ENCODE measurements at regions of chr10 and their contacts with region 1.

Region 1: DNA sequence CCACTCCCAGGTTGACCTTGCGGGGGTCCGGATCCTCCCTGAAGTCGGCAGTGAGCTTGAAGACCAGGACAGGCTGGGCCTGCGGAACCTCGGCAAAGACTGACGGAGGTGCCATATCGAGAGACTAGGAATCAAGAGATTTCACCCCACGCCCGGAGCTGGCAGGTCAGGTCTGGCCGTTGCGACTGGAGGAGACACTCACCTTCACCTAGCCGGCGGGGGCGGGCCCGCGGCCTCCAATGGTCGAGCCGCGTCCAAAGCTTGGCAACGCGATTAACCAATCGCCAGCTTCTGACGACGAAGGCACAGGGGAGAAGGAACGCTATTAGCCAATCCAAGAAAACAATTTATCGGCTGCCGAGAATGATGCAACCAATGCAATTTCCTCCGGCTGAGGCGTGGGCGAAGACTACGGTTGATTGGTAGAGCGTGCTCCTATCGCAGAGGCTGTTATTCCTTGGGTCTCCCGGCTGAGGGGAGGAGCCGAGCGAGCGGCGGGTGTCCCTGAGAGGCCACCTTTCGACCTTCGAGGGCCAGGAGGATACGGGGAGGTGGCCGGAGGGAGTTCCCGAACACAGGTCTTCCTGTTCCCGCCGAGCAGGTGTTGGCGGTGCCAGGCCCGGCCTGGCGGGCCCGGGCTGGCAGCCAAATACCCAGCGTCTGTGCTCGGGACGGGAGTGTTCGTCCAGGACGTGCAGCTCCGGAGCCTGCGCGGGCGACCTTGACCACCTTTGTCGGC is at the start of gene GOT1:
- DNase-seq: peak; percentile 97 to 99
- ATAC-seq: peak; percentile 92 to 97
- H3K4me3 ChIP-seq: peak within 1 kb of the TSS; percentile 81 to 97 (median 94)
- H3K27ac ChIP-seq: peak within 1 kb of the TSS; percentile 96 to 99 (median 98)
- H3K4me1 ChIP-seq: peaks cover 74 to 76% of the 10 kb centered on the region in 2 donors
- H3K27me3 ChIP-seq: no peaks in the 10 kb centered on the region
- CTCF ChIP-seq: peak in 1 of 5 experiments; percentile 10
- POLR2A ChIP-seq: peak; percentile 89 to 93
- total RNA-seq, gene GOT1: 91.4 to 215 (median 135) TPM

Region 2: DNA sequence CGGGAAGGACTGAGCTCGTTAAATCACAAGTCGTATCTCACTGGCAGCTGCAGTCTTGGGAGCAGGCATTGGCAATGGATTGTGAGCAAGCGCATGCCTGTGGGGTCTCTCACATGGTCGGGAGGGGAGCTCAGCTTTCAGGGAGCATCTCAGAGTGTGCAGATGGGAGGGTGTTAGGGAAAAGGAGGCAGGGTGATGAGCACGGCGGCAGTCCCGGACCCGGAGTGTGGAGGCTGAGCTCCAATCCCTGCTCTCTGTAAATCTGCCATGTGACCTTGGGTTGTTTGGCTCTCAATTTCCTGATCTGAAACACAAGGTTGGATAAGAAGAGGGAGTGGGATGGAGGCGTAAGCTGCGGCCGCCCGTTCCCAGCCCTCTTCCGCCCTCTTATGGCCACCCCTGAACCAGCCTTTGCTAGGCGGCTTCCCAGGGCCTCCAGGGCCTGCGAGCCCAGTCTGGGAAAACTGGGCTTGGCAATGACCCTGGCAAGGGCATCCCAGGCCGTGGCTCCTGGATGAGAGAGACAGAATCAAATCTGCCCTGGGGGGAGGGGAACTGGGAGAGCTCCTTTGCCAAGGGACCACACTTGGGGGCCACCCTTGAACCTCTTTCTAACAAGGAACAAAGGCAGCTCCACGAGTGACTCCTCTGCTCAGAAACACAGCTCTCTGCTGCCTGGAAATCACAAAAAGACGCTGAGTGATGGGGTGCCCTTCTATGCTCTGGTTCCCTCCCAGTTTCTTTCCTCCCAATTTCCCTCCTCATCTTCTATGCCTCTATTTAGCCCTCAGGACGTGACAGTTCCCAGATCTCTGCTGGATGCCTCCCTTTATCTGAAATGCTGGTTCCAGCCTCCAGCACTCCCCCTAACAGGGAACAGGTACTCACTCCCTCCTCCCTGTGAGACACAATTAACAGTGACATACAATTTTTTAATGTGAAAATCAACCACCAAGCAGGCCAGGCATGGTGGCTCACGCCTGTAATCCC is 1121.0 kb before region 1 on chr10:
- in situ Hi-C with region 1: no loop called
- intact Hi-C with region 1: loop called (anchors 10 kb)
- DNase-seq: peak; percentile 53 to 69
- ATAC-seq: peak; percentile 75
- H3K4me3 ChIP-seq: no peak overlapping the region
- H3K27ac ChIP-seq: peak overlapping the region in 3 of 4 donors; percentile 2 to 32 (median 5)
- H3K4me1 ChIP-seq: peaks cover 19% of the 10 kb centered on the region in 2 donors
- H3K27me3 ChIP-seq: no peaks in the 10 kb centered on the region
- CTCF ChIP-seq: peak; percentile 74 to 89 (median 83)
- POLR2A ChIP-seq: no peak

Region 3: DNA sequence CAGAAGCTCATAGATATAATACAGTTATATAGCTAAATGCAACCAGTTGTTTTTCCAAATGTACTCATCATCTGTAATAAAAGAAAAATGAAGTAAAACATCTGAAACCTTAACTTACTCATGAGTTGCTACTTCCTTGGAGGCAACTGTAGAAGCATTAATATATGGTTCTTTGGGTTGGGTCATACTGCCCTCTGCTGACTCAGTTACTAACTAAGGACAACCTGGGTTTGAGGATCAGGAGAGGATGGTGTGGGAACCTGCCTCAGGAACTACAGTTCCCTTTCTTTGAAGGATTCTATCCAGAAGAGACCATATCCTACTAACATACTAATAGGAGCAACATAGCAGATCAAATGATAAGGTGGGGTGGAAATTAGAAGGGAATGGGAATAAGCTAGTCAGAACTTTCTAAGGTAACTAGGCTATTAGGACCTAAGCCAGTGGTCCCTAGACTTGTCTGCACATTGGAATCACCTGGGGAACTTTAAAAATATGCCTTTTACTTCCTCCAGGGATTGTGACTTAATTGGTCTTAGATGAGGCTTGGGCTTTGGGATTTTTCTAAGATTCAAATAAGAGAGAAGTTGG is 280.6 kb after region 1 on chr10:
- in situ Hi-C with region 1: loop called in 2 of 4 experiments (anchors 25 kb)
- intact Hi-C with region 1: loop called (anchors 5 kb)
- DNase-seq: no peak
- ATAC-seq: peak; percentile 54 to 75
- H3K4me3 ChIP-seq: no peak overlapping the region
- H3K27ac ChIP-seq: no peak overlapping the region
- H3K4me1 ChIP-seq: no peaks in the 10 kb centered on the region
- H3K27me3 ChIP-seq: no peaks in the 10 kb centered on the region
- CTCF ChIP-seq: peak in 3 of 5 experiments; percentile 25 to 52 (median 34)
- POLR2A ChIP-seq: no peak

Region 4: GRCh38 chr10:99834410-99834809 is 403.8 kb after region 1 on chr10:
- in situ Hi-C with region 1: no loop called
- intact Hi-C with region 1: no loop called
- DNase-seq: no peak
- ATAC-seq: no peak
- H3K4me3 ChIP-seq: no peak overlapping the region
- H3K27ac ChIP-seq: no peak overlapping the region
- H3K4me1 ChIP-seq: no peaks in the 10 kb centered on the region
- H3K27me3 ChIP-seq: no peaks in the 10 kb centered on the region
- CTCF ChIP-seq: no peak
- POLR2A ChIP-seq: no peak

Region 5: GRCh38 chr10:100267237-100268104 is 836.9 kb after region 1 on chr10 and contains the start of gene CWF19L1:
- in situ Hi-C with region 1: no loop called
- intact Hi-C with region 1: loop called (anchors 10 kb)
- DNase-seq: peak; percentile 78 to 86
- ATAC-seq: peak; percentile 99
- H3K4me3 ChIP-seq: peak within 1 kb of the TSS; percentile 68 to 99 (median 90)
- H3K27ac ChIP-seq: peak within 1 kb of the TSS; percentile 76 to 86 (median 80)
- H3K4me1 ChIP-seq: peaks cover 9 to 20% of the 10 kb centered on the region in 2 donors
- H3K27me3 ChIP-seq: no peaks in the 10 kb centered on the region
- CTCF ChIP-seq: no peak
- POLR2A ChIP-seq: peak; percentile 14 to 25
- total RNA-seq, gene CWF19L1: 11.6 to 13.8 (median 13.0) TPM

Measured in gastrocnemius medialis (tissue), 4 donors.